ENCODE measurements at regions of chr1 and their contacts with region 1.

Region 1: GRCh38 chr1:207052911-207053769 is at the start of gene PFKFB2:
- DNase-seq: peak; percentile 99
- total RNA-seq, gene PFKFB2: 49.9 TPM

Region 2: GRCh38 chr1:206507284-206508129 is 545.6 kb before region 1 on chr1 and contains the start of gene RASSF5:
- intact Hi-C with region 1: loop called (anchors 10 kb)
- DNase-seq: peak; percentile 87
- total RNA-seq, gene RASSF5: 15.5 TPM

Region 3: GRCh38 chr1:206674745-206675175 is 378.4 kb before region 1 on chr1:
- intact Hi-C with region 1: loop called (anchors 10 kb)
- DNase-seq: no peak

Region 4: GRCh38 chr1:207077470-207078377 is 24.6 kb after region 1 on chr1:
- intact Hi-C with region 1: loop called (anchors 2 kb)
- DNase-seq: no peak